BJ (cell line): ENCODE measurements at regions of chr7 and their contacts with region 1.

Region 1: GRCh38 chr7:151327659-151328058 is 14.0 kb upstream of the NUB1 start:
- DNase-seq: no peak
- H3K4me3 ChIP-seq: no peak overlapping the region
- H3K27me3 ChIP-seq: no peaks in the 10 kb centered on the region; the same call in 1 of the 2 replicates
- CTCF ChIP-seq: no peak

Region 2: DNA sequence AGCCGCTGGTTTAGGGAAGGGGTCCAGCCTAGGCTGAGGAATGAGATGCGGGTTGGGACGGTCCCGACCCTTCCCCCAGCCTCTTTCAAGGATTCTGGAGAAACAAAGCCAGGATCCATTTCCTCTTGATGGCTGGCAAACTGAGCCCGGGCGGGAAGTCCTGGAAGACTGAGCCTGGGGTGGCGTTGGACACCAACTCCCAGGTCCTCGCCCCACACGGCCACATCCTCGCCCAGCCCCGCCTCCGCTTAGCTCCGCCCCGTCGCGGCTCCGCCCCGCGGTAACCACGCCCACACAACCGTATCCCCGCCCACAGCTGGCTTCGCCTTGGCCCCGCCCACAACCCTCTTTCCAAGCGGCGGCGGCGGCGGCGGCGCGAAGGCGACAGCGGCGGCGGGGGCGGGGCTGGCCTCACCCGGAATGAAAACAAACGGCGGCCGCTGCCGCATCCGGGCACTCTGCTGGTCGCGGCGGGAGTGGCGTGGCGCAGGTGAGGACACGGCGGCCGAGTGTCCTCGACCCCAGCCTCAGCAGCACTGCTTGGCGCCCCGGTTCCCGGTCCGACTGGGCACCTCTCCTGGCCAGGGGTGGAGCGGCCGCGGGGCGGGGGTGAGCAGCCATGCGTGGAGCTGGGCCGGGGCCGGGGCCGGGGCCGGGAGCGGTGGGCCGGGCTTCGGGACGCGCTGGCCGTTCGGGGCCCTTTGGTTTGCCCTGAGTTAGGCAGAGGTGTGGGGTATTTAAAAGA is 13.9 kb after region 1 on chr7 and contains the start of gene NUB1:
- CTCF ChIA-PET with region 1: interaction called, 10 read pairs
- POLR2A ChIA-PET with region 1: no interaction called
- DNase-seq: peak; percentile 14
- H3K4me3 ChIP-seq: peak within 1 kb of the TSS; percentile 80
- H3K27me3 ChIP-seq: peaks cover 3% of the 10 kb centered on the region
- CTCF ChIP-seq: no peak
- polyA plus RNA-seq, gene NUB1: 44.5 and 46.3 TPM in 2 replicates